ENCODE measurements at regions of chr17 and their contacts with region 1.

Region 1: DNA sequence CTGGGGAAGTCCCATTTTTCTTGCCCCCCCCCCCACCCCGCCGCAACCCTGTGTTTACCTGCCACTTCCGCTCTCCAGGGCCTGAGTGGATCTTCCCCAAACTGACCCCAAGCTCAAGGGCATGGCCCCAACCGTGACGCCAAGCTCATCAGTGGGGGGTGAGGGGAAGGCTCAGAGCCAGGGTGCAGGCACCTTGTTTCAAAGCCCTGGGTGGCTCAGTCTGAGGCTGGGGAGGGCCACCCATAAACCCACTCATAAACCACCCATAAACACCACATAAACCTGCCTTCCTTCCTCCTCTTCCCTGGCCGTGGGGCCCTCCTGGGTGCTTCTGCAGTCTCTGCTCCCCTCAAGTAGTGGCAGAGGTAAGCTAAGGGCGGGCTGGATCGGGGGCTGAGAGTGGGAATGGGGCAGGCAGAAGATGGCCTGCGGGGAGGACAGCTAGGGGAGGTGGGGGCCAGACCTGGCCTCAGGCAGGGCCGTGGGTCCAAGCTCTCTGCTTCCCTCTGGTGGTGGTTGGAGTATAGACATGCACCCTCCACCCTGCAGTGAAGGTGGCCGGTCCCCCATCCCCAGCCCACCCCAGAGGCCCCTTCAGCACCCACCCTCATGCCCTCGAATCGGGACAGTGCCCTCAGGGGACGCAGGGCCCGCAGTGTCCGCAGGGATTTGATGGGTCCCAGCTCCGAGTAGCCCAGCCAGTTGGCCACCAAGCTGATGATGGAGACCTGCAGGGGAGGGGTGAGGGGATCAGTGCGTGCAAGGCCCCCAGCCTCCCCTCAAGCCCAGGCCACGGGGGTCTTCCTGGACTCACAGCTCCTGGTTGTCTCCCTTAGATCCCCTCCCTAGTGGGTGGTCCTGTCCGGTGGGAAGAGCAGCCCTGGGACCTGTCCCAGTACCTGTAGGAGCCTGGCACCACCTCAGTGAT is 14.6 kb upstream of the CD79B start:
- DNase-seq: peak; percentile 79
- ATAC-seq: peak; percentile 85
- H3K4me3 Mint-ChIP-seq: peak overlapping the region; percentile 39
- H3K27ac Mint-ChIP-seq: peak overlapping the region; percentile 62
- H3K4me1 Mint-ChIP-seq: peaks cover 19% of the 10 kb centered on the region
- H3K27me3 Mint-ChIP-seq: peaks cover 21% of the 10 kb centered on the region

Region 2: GRCh38 chr17:63911657-63912426 is 34.9 kb before region 1 on chr17:
- CTCF ChIA-PET with region 1: interaction called, 77 read pairs
- DNase-seq: peak; percentile 73
- ATAC-seq: peak; percentile 65
- H3K4me3 Mint-ChIP-seq: no peak overlapping the region
- H3K27ac Mint-ChIP-seq: no peak overlapping the region
- H3K4me1 Mint-ChIP-seq: no peaks in the 10 kb centered on the region
- H3K27me3 Mint-ChIP-seq: peaks cover 31% of the 10 kb centered on the region

Region 3: DNA sequence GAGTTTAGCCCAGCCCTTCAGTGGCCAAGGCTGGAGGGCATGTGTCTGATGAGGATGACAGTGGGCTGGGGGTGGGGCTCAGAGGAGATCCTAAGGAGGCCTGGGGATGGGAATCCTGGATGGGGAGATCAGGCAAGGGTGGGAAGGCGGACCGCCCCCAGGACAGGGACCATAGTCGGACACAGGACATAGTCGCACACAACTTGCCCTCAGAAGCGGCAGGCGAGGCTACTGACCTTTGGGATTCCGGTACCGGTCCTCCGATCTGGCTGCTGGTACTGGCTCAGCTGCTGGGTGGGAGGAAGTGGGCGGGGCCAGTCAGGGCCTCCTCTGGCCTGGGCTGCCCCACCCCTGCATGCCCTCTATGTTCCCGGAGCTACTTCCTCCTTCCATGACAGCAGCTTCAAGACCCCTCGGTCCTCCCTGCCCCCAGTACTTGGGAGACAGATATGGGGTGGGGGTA is 15.6 kb before region 1 on chr17:
- CTCF ChIA-PET with region 1: interaction called, 33 read pairs
- DNase-seq: peak; percentile 82
- ATAC-seq: peak; percentile 88
- H3K4me3 Mint-ChIP-seq: peak overlapping the region; percentile 81
- H3K27ac Mint-ChIP-seq: peak overlapping the region; percentile 86
- H3K4me1 Mint-ChIP-seq: peaks cover 20% of the 10 kb centered on the region
- H3K27me3 Mint-ChIP-seq: peaks cover 7% of the 10 kb centered on the region

Region 4: GRCh38 chr17:63984651-63985386 is 38.1 kb after region 1 on chr17:
- CTCF ChIA-PET with region 1: interaction called, 17 read pairs
- DNase-seq: peak; percentile 67
- ATAC-seq: peak; percentile 83
- H3K4me3 Mint-ChIP-seq: no peak overlapping the region
- H3K27ac Mint-ChIP-seq: peak overlapping the region; percentile 72
- H3K4me1 Mint-ChIP-seq: peaks cover 15% of the 10 kb centered on the region
- H3K27me3 Mint-ChIP-seq: no peaks in the 10 kb centered on the region

Region 5: GRCh38 chr17:64020056-64020766 is 73.5 kb after region 1 on chr17 and contains the start of gene ICAM2:
- CTCF ChIA-PET with region 1: interaction called, 32 read pairs
- DNase-seq: peak; percentile 97
- ATAC-seq: peak; percentile 75
- H3K4me3 Mint-ChIP-seq: peak within 1 kb of the TSS; percentile 92
- H3K27ac Mint-ChIP-seq: peak within 1 kb of the TSS; percentile 98
- H3K4me1 Mint-ChIP-seq: peaks cover 73% of the 10 kb centered on the region
- H3K27me3 Mint-ChIP-seq: no peaks in the 10 kb centered on the region
- total RNA-seq, gene ICAM2: 39.0 to 40.6 TPM

Region 6: GRCh38 chr17:64183815-64184214 is 237.1 kb after region 1 on chr17:
- CTCF ChIA-PET with region 1: no interaction called
- DNase-seq: peak; percentile 50
- ATAC-seq: peak; percentile 45
- H3K4me3 Mint-ChIP-seq: no peak overlapping the region
- H3K27ac Mint-ChIP-seq: no peak overlapping the region
- H3K4me1 Mint-ChIP-seq: peaks cover 18% of the 10 kb centered on the region
- H3K27me3 Mint-ChIP-seq: no peaks in the 10 kb centered on the region

Measured in activated CD8-positive, alpha-beta memory T cell treated with anti-CD3 and anti-CD28 coated beads, Interleukin-2, amount 10 ng/mL, durations not matched to agents 7 days and 5 days (primary cell).